Left cardiac atrium (tissue), 4 donors: ENCODE measurements at regions of chr16 and their contacts with region 1.

Region 1: GRCh38 chr16:64089697-64090096 is 1032.2 kb downstream of the CDH11 start:
- DNase-seq: no peak
- ATAC-seq: no peak

Region 2: GRCh38 chr16:64450177-64450576 is 360.5 kb after region 1 on chr16:
- intact Hi-C with region 1: loop called (anchors 5 kb)
- DNase-seq: no peak
- ATAC-seq: no peak

Region 3: GRCh38 chr16:64455254-64455653 is 365.6 kb after region 1 on chr16:
- intact Hi-C with region 1: loop called (anchors 5 kb)
- DNase-seq: no peak
- ATAC-seq: peak in 1 of 2 donors; percentile 54